ENCODE measurements at regions of chr15 and their contacts with region 1.

Region 1: DNA sequence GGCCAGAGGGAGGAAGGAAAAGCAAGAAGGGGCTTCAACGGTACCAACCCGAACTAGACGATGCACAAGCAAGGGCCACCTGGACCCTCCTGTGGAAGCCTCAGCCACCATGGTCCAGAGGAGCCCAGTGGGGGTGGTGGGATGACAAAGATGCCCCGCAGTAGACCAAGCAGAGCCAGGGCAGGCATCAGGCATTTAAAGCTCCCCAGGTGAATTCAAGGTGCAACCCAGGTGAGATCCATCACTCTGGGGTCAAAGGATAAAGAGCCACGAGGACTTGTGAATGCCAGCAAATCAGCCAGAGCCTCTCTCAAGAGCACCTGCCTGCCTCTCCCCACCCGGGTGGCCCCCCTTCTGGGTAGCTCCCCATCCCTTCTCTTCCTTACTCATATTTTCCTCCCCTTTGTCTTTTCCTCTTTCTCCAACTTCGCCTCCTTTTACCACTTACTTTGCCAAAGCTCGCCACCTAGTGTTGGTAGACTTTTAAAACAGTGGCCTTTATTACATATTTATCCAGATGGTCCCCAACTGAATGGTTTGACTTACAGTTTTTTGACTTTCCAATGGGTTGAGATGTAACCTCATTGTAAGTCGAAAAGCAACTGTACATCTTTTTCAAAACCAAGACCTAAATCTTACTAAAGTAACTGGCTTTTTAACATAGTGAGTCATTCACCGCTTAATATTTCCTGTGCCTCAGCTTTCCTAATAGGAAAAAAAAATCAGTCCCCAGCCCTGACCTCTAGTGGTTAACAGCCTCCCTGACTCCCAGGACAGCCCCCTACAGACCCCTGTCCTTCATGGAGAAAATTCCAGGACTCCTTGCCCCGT is 18.8 kb downstream of the PLA2G4F start:
- DNase-seq: peak in 1 of 4 donors; percentile 47
- ATAC-seq: peak; percentile 49
- H3K4me3 ChIP-seq: no peak overlapping the region
- H3K27ac ChIP-seq: no peak overlapping the region
- H3K4me1 ChIP-seq: no peaks in the 10 kb centered on the region
- H3K27me3 ChIP-seq: no peaks in the 10 kb centered on the region
- CTCF ChIP-seq: peak; percentile 37 to 42

Region 2: GRCh38 chr15:41779662-41780157 is 357.9 kb before region 1 on chr15:
- intact Hi-C with region 1: no loop called
- DNase-seq: no peak
- ATAC-seq: peak; percentile 59
- H3K4me3 ChIP-seq: no peak overlapping the region
- H3K27ac ChIP-seq: peak overlapping the region; percentile 39 to 49
- H3K4me1 ChIP-seq: peaks cover 35 to 48% of the 10 kb centered on the region in 2 donors
- H3K27me3 ChIP-seq: no peaks in the 10 kb centered on the region
- CTCF ChIP-seq: no peak

Region 3: DNA sequence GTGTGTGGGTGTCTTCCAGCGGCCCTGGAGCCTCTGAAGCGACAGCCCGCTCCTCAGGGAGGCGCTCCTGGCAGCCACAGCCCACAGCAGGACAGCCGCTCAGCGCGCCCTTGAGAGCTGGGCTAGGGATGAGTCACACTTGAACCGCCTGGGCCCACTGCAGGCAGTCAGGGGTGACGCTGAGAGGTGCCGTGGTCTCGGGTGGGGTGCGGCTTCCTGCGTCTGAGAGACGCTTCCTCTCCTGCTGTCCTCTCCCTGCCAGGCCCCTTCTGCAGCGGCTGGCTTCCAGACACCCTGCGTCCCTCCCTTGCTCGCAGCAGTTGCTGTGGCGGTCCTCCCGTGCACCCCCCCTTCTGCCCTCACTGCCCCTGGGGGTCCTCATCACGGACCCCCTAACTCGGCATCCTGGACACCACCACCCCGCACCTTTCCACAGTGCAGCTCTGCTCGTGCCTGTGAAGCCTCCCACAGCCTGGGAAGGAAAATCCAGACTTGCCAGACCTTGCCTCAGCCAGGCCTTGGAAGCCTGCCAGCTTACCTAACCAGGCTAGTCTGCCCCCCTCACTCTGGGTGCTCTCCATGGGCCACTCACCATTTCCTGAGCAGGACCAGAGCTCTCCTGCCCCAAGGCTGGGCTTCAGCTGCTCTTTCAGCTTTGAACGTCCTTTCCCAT is 242.7 kb before region 1 on chr15:
- intact Hi-C with region 1: no loop called
- DNase-seq: peak in 3 of 4 donors; percentile 57 to 92 (median 83)
- ATAC-seq: peak; percentile 87
- H3K4me3 ChIP-seq: no peak overlapping the region
- H3K27ac ChIP-seq: peak overlapping the region; percentile 67 to 79
- H3K4me1 ChIP-seq: peaks cover 13 to 28% of the 10 kb centered on the region in 2 donors
- H3K27me3 ChIP-seq: no peaks in the 10 kb centered on the region
- CTCF ChIP-seq: no peak

Region 4: GRCh38 chr15:41989259-41989933 is 148.2 kb before region 1 on chr15:
- intact Hi-C with region 1: loop called in 1 of 2 experiments (anchors 5 kb)
- DNase-seq: peak; percentile 71 to 95 (median 83)
- ATAC-seq: peak; percentile 94
- H3K4me3 ChIP-seq: no peak overlapping the region
- H3K27ac ChIP-seq: no peak overlapping the region
- H3K4me1 ChIP-seq: peaks cover 0 to 10% of the 10 kb centered on the region in 2 donors
- H3K27me3 ChIP-seq: no peaks in the 10 kb centered on the region
- CTCF ChIP-seq: peak; percentile 98 to 99

Region 5: GRCh38 chr15:42065033-42065432 is 72.6 kb before region 1 on chr15:
- intact Hi-C with region 1: loop called in 1 of 2 experiments (anchors 5 kb)
- DNase-seq: peak in 2 of 4 donors; percentile 36 to 40
- ATAC-seq: peak; percentile 9
- H3K4me3 ChIP-seq: no peak overlapping the region
- H3K27ac ChIP-seq: no peak overlapping the region
- H3K4me1 ChIP-seq: peaks cover 0 to 9% of the 10 kb centered on the region in 2 donors
- H3K27me3 ChIP-seq: no peaks in the 10 kb centered on the region
- CTCF ChIP-seq: no peak

Region 6: DNA sequence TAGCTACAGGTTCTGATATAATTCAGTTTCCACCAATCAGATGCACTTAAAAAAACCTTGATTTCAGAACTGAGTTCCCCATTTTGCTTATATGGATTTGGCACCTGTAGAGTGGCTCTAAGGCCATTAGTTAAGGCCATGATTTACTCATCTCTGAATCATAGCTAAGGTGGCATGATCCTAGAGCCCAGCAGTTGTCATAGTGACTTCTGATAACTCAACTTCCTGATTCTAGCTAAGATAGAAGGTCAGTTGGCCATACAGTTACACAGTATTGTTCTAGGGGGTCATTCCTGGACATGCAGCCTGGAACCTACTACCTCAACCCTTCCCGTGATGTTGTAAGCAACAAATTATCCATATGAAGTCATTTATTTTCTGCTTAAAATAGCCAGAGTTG is 151.5 kb after region 1 on chr15:
- intact Hi-C with region 1: no loop called
- DNase-seq: no peak
- ATAC-seq: no peak
- H3K4me3 ChIP-seq: no peak overlapping the region
- H3K27ac ChIP-seq: no peak overlapping the region
- H3K4me1 ChIP-seq: peaks cover 0 to 19% of the 10 kb centered on the region in 2 donors
- H3K27me3 ChIP-seq: no peaks in the 10 kb centered on the region
- CTCF ChIP-seq: no peak

Region 7: GRCh38 chr15:42371125-42371524 is 233.5 kb after region 1 on chr15:
- intact Hi-C with region 1: no loop called
- DNase-seq: no peak
- ATAC-seq: no peak
- H3K4me3 ChIP-seq: no peak overlapping the region
- H3K27ac ChIP-seq: no peak overlapping the region
- H3K4me1 ChIP-seq: peaks cover 2 to 27% of the 10 kb centered on the region in 2 donors
- H3K27me3 ChIP-seq: no peaks in the 10 kb centered on the region
- CTCF ChIP-seq: no peak